Aorta (tissue), 5 donors: ENCODE measurements at regions of chr9 and their contacts with region 1.

Region 1: GRCh38 chr9:70602321-70603019 is 188.0 kb upstream of the KLF9 start:
- DNase-seq: no peak
- ATAC-seq: peak; percentile 88
- H3K4me3 ChIP-seq: no peak overlapping the region
- H3K27ac ChIP-seq: peak overlapping the region; percentile 60 to 85
- H3K4me1 ChIP-seq: peaks cover 2 to 3% of the 10 kb centered on the region in 2 donors
- H3K27me3 ChIP-seq: no peaks in the 10 kb centered on the region

Region 2: GRCh38 chr9:69971643-69972449 is 630.6 kb before region 1 on chr9:
- intact Hi-C with region 1: loop called in 1 of 2 experiments (anchors 10 kb)
- DNase-seq: peak; percentile 81 to 89
- ATAC-seq: peak; percentile 84
- H3K4me3 ChIP-seq: no peak overlapping the region
- H3K27ac ChIP-seq: no peak overlapping the region
- H3K4me1 ChIP-seq: peaks cover 0 to 4% of the 10 kb centered on the region in 2 donors
- H3K27me3 ChIP-seq: no peaks in the 10 kb centered on the region

Region 3: DNA sequence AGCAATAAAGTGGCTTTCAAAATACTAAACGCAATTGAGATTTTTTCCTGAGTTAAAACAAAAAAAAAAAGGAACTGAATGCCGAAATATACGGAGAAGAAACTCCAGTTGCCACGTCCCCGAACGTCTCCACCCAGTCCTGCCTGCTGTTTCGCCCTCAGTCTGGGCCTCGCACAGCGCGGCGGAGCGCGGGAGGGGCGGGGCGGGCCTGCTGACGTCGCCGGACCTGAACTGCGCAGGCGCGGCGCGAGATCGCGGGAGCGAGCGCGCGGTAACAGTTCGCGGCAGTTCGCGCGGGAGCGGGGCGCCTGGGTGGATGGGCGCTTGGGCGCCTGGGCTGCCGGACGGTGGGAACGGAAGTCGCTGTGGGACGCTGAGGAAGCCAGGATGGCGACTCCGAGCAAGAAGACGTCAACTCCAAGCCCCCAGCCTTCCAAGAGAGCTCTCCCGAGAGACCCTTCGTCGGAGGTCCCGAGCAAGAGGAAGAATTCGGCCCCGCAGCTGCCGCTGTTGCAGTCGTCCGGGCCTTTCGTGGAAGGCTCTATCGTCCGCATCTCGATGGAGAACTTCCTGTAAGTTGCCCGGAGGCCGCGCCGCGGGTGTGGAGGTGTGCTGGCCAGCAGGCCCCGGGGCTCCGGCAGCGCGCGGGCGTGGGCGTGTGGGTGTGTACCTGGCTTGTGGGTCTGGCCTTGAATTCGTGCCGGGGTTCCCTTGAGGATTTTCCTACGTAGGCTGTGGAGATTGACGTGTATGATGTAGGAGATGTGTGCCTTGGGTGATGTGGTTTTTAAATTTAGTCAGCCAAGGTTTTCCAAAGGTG is 343.6 kb before region 1 on chr9 and contains the start of gene SMC5:
- intact Hi-C with region 1: loop called in 1 of 2 experiments (anchors 5 kb)
- DNase-seq: peak; percentile 93 to 96
- ATAC-seq: peak; percentile 98
- H3K4me3 ChIP-seq: peak within 1 kb of the TSS; percentile 94 to 95
- H3K27ac ChIP-seq: peak within 1 kb of the TSS; percentile 64 to 87
- H3K4me1 ChIP-seq: peaks cover 8 to 15% of the 10 kb centered on the region in 2 donors
- H3K27me3 ChIP-seq: no peaks in the 10 kb centered on the region
- total RNA-seq, gene SMC5: 36.4 to 37.0 TPM

Region 4: GRCh38 chr9:70340572-70340971 is 261.9 kb before region 1 on chr9:
- intact Hi-C with region 1: loop called in 1 of 2 experiments (anchors 5 kb)
- DNase-seq: no peak
- ATAC-seq: no peak
- H3K4me3 ChIP-seq: no peak overlapping the region
- H3K27ac ChIP-seq: no peak overlapping the region
- H3K4me1 ChIP-seq: no peaks in the 10 kb centered on the region
- H3K27me3 ChIP-seq: no peaks in the 10 kb centered on the region

Region 5: GRCh38 chr9:70413798-70414775 is 188.4 kb before region 1 on chr9 and contains the start of gene KLF9:
- intact Hi-C with region 1: loop called (anchors 1 to 2 kb)
- DNase-seq: peak; percentile 95 to 98
- ATAC-seq: peak; percentile 90
- H3K4me3 ChIP-seq: peak within 1 kb of the TSS; percentile 83 to 88
- H3K27ac ChIP-seq: peak within 1 kb of the TSS; percentile 98 to 100
- H3K4me1 ChIP-seq: no peaks in the 10 kb centered on the region
- H3K27me3 ChIP-seq: no peaks in the 10 kb centered on the region
- total RNA-seq, gene KLF9: 38.4 to 122 TPM

Region 6: DNA sequence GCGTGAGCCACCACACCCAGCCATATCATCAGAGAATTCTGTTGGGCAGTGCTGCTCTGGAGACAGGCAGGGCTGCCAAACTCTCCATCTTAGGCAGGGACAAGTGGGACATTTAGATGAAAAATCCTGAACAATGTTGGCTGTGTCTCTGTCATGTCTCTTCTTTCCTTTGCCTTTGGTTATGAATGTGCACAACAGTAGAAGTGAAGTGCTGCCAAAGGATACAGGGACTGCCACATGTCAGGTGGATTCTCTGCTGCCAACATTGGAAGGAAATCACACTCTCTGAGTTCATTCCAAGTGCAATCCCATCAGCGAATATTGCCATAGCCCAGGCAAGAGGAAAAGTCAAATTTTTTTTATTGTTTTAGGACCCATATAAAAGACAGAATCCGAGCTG is 170.1 kb after region 1 on chr9:
- intact Hi-C with region 1: no loop called
- DNase-seq: no peak
- ATAC-seq: no peak
- H3K4me3 ChIP-seq: no peak overlapping the region
- H3K27ac ChIP-seq: no peak overlapping the region
- H3K4me1 ChIP-seq: no peaks in the 10 kb centered on the region
- H3K27me3 ChIP-seq: no peaks in the 10 kb centered on the region